ENCODE measurements at regions of chrX and their contacts with region 1.

Region 1: GRCh38 chrX:129781134-129781672 is 1.5 kb downstream of the SASH3 start:
- DNase-seq: peak; percentile 83
- ATAC-seq: peak; percentile 79
- H3K4me3 ChIP-seq: peak overlapping the region; percentile 84
- H3K27ac ChIP-seq: peak overlapping the region; percentile 96
- H3K4me1 ChIP-seq: peaks cover 54% of the 10 kb centered on the region
- H3K27me3 ChIP-seq: no peaks in the 10 kb centered on the region
- CTCF ChIP-seq: no peak
- EP300 ChIP-seq: peak in 1 of 2 experiments; percentile 16; a peak in 3 of 4 replicates
- POLR2A ChIP-seq: peak; percentile 77
- RAD21 ChIP-seq: no peak

Region 2: DNA sequence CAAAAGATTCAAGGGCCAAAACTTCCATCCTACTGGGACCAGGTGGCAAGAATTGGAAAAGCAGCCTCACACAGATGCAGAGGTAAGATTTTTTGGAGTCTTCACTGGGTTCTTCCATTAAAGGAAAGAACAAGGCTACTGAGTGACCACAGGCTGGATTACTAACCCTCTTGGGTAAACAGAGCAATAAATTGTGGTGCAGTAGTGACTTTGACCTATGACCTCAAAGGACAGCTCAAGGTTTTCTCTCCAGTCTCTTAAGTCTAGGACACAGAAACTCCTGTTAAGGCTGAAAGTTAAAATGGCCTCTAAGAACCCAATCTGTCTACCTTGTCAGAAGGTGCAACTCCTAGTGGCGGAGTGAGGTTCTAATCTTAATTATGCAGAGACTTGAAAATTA is 722.8 kb before region 1 on chrX:
- CTCF ChIA-PET with region 1: no interaction called
- POLR2A ChIA-PET with region 1: no interaction called
- RAD21 ChIA-PET with region 1: no interaction called
- SMC1A ChIA-PET with region 1: no interaction called
- in situ Hi-C with region 1: no loop called
- intact Hi-C with region 1: no loop called
- DNase-seq: no peak
- ATAC-seq: no peak
- H3K4me3 ChIP-seq: no peak overlapping the region
- H3K27ac ChIP-seq: no peak overlapping the region
- H3K4me1 ChIP-seq: no peaks in the 10 kb centered on the region
- H3K27me3 ChIP-seq: no peaks in the 10 kb centered on the region
- CTCF ChIP-seq: no peak
- EP300 ChIP-seq: no peak
- POLR2A ChIP-seq: no peak
- RAD21 ChIP-seq: no peak

Region 3: DNA sequence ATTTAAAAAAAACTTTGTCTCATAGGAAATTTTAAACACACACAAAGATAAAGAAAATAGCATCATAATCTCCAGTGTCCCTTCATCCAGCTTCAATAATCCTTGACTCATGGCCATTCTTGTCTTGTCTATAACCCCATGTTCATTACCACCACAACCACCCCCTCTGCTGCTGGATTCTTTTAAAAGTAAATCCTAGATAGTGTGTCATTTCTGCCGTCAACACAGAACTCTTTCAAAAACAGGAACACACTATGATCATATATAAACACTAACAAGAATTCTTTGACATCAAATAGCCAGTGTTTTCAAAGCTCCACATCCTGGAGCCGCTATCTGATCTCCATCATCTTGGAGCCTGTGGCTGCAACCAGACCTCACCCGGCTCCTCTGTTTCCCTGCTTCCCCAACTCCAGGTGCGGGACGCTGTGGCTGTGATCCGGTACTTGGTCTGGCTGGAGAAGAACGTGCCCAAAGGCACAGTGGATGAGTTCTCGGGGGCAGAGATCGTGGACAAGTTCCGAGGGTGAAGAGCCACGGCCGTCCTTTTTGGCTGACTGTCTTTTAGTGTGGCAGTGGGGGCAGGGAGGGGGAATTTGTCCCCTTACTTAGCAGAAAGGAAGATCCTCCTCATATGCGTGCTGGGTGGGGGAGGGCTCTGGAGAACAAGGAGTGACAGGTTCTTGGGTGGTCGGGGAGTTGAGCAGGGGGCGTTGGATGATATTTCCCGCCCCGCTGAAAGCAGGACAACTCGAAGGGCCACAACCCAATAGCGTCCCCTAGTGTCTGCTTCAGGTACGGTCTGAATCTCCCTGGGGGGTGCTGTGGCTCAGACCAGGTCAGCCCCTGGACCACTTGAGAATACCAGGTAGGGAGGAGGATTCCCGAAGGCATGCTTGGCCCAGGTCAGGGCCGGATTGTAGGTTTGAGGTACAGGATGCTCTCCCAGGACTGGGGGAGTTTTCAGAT is 26.9 kb before region 1 on chrX:
- CTCF ChIA-PET with region 1: interaction called, 13 read pairs
- POLR2A ChIA-PET with region 1: interaction called, 17 read pairs
- RAD21 ChIA-PET with region 1: interaction called, 65 read pairs
- SMC1A ChIA-PET with region 1: interaction called, 58 read pairs
- in situ Hi-C with region 1: no loop called
- intact Hi-C with region 1: loop called (anchors 2 kb)
- DNase-seq: no peak
- ATAC-seq: no peak
- H3K4me3 ChIP-seq: no peak overlapping the region
- H3K27ac ChIP-seq: no peak overlapping the region
- H3K4me1 ChIP-seq: peaks cover 19% of the 10 kb centered on the region
- H3K27me3 ChIP-seq: no peaks in the 10 kb centered on the region
- CTCF ChIP-seq: peak; percentile 31 to 60 (median 56); a peak in 5 of 6 replicates
- EP300 ChIP-seq: no peak
- POLR2A ChIP-seq: no peak
- RAD21 ChIP-seq: peak; percentile 59

Region 4: GRCh38 chrX:129759576-129760061 is 21.6 kb before region 1 on chrX:
- CTCF ChIA-PET with region 1: interaction called, 13 read pairs
- POLR2A ChIA-PET with region 1: interaction called, 17 read pairs
- RAD21 ChIA-PET with region 1: interaction called, 65 read pairs
- SMC1A ChIA-PET with region 1: interaction called, 58 read pairs
- in situ Hi-C with region 1: no loop called
- intact Hi-C with region 1: loop called (anchors 2 kb)
- DNase-seq: no peak
- ATAC-seq: peak; percentile 61
- H3K4me3 ChIP-seq: no peak overlapping the region
- H3K27ac ChIP-seq: peak overlapping the region; percentile 38; the same call in 1 of the 2 replicates
- H3K4me1 ChIP-seq: peaks cover 29% of the 10 kb centered on the region
- H3K27me3 ChIP-seq: no peaks in the 10 kb centered on the region
- CTCF ChIP-seq: 0 out of 6 replicates have a peak, but pooled peaks of 1 of the 3 experiments have one; percentile 20
- EP300 ChIP-seq: no peak
- POLR2A ChIP-seq: no peak
- RAD21 ChIP-seq: peak; percentile 44; the same call in 1 of the 2 replicates